Caco-2 (cell line): ENCODE measurements at regions of chr7 and their contacts with region 1.

Region 1: DNA sequence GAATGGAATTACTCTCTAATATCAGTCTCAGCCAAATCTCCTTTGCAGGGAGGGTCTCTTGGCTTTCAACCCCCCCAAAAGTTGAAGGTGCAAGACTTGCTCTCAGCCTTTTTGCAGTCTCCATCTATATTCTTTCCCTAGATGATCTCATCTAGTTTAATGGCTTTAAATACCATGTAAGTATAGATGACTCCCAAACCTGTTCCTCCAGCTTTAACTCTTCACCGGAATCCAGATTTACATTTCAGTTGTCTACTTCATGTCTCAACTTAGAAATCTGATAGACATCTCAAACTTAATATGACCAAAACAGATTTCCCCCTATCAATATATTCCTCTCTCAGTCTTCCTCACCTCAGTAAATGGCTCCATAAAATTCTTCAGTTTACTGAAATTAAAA is 10.0 kb upstream of the TAS2R41 start:
- DNase-seq: no peak
- H3K4me3 ChIP-seq: no peak overlapping the region
- H3K4me3 Mint-ChIP-seq: no peak overlapping the region
- H3K27ac Mint-ChIP-seq: peak overlapping the region; percentile 2
- H3K4me1 ChIP-seq: peaks cover 22% of the 10 kb centered on the region
- H3K4me1 Mint-ChIP-seq: peaks cover 23% of the 10 kb centered on the region
- H3K27me3 ChIP-seq: no peaks in the 10 kb centered on the region
- H3K27me3 Mint-ChIP-seq: no peaks in the 10 kb centered on the region
- CTCF ChIP-seq: no peak

Region 2: DNA sequence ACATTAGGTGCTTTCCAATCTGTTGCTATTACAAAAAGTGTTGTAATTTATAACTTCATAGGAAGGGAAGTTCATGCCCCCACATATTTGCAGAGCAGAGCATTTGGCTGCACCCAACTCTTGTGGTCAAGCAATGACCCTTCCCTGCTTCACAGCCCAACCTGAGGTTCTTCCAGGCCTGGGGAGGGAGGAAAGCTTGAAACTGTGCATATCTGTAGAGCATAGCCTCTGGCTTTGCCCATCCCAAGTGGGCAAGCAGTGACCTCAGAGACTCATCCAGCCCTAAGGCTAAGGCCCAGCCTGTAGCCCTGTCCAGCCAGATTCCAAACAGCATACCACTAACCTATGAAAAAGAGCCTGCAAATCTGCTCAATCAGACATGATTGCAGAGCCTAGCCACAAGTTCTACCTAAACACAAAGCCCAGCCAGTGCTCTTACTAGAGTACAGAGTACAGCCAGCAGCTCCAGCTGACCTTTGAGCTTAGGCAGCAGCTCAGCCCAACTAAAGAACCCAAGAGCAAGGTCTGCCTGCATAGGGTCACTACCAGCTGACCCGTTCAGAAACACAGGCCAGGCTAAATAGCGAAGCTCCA is 218.9 kb before region 1 on chr7:
- CTCF ChIA-PET with region 1: interaction called, 13 read pairs
- POLR2A ChIA-PET with region 1: no interaction called
- intact Hi-C with region 1: no loop called
- DNase-seq: peak; percentile 71 to 85
- H3K4me3 ChIP-seq: no peak overlapping the region
- H3K4me3 Mint-ChIP-seq: peak overlapping the region; percentile 13
- H3K27ac Mint-ChIP-seq: no peak overlapping the region
- H3K4me1 ChIP-seq: peaks cover 34% of the 10 kb centered on the region
- H3K4me1 Mint-ChIP-seq: peaks cover 30% of the 10 kb centered on the region
- H3K27me3 ChIP-seq: no peaks in the 10 kb centered on the region
- H3K27me3 Mint-ChIP-seq: no peaks in the 10 kb centered on the region
- CTCF ChIP-seq: no peak

Region 3: DNA sequence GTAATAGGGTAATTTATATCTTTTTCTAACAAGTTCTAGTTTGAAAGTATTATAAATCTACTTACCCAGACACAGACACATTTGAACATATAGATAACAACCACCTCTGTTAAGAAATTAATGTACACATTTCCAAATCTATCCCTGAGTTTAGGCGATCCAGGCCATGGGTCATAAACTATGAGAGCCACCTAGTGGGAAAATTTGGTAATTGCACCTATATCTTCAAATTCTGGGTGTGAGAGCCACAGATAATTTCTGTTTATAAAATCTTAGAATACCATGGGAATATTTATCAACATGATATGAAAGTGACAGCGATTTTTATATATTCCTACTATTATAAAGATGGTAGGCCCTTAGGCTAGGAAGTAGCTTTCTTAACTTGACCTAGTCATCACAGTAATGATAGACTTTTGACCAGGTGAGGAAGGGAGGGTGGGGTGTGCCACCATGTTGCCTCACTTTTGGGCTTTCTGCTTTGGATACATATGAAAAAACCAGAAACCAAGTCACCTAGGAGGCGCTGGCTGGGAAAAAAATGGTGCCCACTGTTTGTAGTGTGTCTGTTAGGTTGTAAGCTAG is 51.1 kb before region 1 on chr7:
- CTCF ChIA-PET with region 1: interaction called, 3 read pairs
- POLR2A ChIA-PET with region 1: no interaction called
- intact Hi-C with region 1: loop called (anchors 2 kb)
- DNase-seq: peak in 1 of 2 experiments; percentile 66
- H3K4me3 ChIP-seq: no peak overlapping the region
- H3K4me3 Mint-ChIP-seq: no peak overlapping the region
- H3K27ac Mint-ChIP-seq: no peak overlapping the region
- H3K4me1 ChIP-seq: peaks cover 17% of the 10 kb centered on the region
- H3K4me1 Mint-ChIP-seq: peaks cover 35% of the 10 kb centered on the region
- H3K27me3 ChIP-seq: no peaks in the 10 kb centered on the region
- H3K27me3 Mint-ChIP-seq: no peaks in the 10 kb centered on the region
- CTCF ChIP-seq: peak; percentile 70 to 75

Region 4: GRCh38 chr7:143490717-143491306 is 23.1 kb after region 1 on chr7:
- CTCF ChIA-PET with region 1: interaction called, 3 read pairs
- POLR2A ChIA-PET with region 1: no interaction called
- intact Hi-C with region 1: loop called (anchors 2 kb)
- DNase-seq: peak; percentile 68 to 69
- H3K4me3 ChIP-seq: no peak overlapping the region
- H3K4me3 Mint-ChIP-seq: no peak overlapping the region
- H3K27ac Mint-ChIP-seq: no peak overlapping the region
- H3K4me1 ChIP-seq: peaks cover 17% of the 10 kb centered on the region
- H3K4me1 Mint-ChIP-seq: peaks cover 18% of the 10 kb centered on the region
- H3K27me3 ChIP-seq: no peaks in the 10 kb centered on the region
- H3K27me3 Mint-ChIP-seq: no peaks in the 10 kb centered on the region
- CTCF ChIP-seq: peak; percentile 77 to 91